ENCODE measurements at regions of chr4 and their contacts with region 1.

Region 1: DNA sequence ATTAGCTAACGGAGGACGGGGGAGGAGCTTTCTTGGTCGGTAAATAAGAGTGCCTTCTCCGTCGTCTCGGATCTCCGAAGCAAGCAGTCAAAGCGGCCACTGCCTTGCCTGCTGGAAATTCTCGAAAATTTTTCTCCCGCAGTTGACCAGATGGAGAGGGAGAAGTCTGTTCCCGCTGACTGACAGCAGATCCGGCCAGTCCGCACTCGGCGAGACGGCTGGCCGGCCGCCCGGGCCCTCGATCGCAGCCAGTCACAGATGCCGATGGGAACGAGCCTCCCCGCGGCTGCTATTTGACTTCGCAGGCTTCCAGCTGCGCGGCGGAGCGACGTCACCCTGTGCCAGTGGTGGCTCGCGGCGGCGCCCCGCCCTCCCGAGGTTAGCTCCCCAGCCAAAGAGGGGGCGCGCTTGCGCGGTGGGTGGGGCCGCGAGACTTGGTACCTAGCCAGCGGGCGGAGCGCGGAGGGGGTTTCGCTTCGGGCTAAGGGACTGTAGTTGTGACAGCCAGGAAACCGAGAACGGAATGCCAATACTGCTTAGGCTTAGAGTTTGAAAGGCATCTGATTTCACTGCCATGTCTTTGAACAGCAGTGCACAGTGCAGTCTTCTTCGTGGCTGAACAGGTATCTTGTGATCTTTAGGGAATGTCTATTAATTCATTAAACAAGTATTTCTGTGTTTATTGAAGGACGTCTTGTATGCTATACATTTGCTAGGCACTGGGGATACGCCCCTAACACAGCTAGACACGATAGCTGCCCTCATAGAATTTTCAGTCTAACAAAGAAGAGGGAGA is at the start of gene PPM1K:
- H3K4me3 Mint-ChIP-seq: peak within 1 kb of the TSS; percentile 92
- H3K27ac Mint-ChIP-seq: peak within 1 kb of the TSS; percentile 99
- H3K4me1 Mint-ChIP-seq: peaks cover 31% of the 10 kb centered on the region
- H3K27me3 Mint-ChIP-seq: no peaks in the 10 kb centered on the region

Region 2: DNA sequence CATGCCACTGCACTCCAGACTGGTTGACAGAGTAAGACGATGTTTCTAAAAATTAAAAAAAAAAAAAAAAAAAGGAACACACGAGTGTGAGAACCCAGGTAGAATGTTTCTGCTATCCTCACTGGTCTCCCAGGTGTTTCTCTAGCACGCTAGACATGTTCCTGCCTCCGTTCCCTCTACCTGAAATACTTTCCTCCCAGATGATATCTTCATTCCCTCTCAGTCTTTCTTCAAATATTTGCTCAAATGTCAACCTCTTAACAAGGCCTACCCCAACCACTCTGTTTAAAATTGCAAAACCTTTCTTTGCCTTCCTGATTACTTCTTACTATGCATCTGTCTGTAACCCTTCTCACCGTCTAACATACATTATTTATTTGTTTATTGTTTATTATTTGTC is 66.7 kb before region 1 on chr4:
- intact Hi-C with region 1: loop called (anchors 2 kb)
- H3K4me3 Mint-ChIP-seq: no peak overlapping the region
- H3K27ac Mint-ChIP-seq: no peak overlapping the region
- H3K4me1 Mint-ChIP-seq: peaks cover 7% of the 10 kb centered on the region
- H3K27me3 Mint-ChIP-seq: peaks cover 4% of the 10 kb centered on the region

Region 3: DNA sequence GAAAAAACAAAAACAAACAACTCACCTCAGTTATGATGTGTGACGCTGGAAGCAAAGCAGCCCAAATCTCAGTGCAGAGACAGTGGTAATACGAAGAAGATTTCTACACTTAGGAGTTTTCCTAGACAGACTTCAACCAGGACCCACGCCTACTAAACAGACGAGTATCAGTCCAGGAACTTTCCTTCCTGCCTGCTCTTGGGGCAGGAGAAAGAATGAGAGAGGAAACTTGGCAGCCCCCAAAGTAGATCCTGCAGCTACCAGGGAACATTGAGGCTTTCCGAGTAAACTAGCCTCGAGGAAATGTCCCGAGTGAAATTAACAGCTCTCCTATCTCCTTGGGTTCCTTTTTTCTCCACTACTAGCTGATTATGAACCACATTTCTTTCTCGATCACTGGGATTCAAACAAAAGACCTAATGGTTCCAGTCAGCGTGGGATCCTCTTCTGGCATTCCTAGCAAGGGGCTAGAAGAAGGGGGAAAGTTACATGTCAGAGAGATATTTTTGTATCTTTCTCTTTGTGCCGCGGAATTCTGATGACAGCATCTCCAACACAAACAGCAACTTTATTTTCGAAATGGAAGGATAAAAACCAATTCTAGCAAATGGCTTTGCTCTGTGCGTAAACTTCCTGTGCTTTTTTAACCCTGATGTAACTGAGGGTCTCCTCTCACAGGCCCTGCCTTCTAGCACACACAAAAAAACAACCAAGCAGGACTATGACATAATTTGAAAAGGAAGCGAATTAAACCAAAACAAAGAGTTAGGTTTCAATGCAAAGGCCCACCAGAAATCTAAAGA is 53.5 kb before region 1 on chr4:
- intact Hi-C with region 1: no loop called
- H3K4me3 Mint-ChIP-seq: no peak overlapping the region
- H3K27ac Mint-ChIP-seq: peak overlapping the region; percentile 55
- H3K4me1 Mint-ChIP-seq: peaks cover 8% of the 10 kb centered on the region
- H3K27me3 Mint-ChIP-seq: no peaks in the 10 kb centered on the region

Region 4: DNA sequence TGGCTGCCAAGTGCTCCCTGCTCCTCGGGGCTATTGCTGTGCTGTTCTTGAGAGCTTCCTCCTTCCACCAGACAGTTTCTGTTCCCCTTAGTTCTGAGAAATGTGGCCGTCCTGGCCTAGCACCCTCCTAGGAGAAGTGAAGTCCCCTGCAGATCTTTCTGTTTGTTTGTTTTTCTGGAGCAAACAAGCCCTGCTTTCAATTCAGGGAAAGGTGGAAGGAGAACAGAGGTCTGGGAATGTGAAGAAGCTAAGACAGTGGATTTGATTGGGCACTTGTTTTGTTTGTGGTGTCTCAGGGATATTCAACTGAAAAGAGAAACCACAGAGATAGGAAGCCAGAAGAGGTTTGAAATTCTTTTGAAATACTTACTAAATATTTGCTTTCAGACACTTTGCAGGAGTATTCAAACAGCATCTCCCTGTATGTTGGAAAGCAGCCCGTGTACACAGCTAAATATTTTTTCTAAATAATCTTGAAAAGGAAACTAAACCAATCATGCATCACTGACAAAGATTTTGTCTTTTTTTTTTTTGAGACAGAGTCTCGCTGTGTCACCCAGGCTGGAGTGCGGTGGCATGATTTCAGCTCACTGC is 36.2 kb after region 1 on chr4:
- intact Hi-C with region 1: loop called (anchors 2 kb)
- H3K4me3 Mint-ChIP-seq: peak overlapping the region; percentile 63
- H3K27ac Mint-ChIP-seq: peak overlapping the region; percentile 95
- H3K4me1 Mint-ChIP-seq: peaks cover 27% of the 10 kb centered on the region
- H3K27me3 Mint-ChIP-seq: no peaks in the 10 kb centered on the region

Region 5: GRCh38 chr4:88334967-88335665 is 50.5 kb after region 1 on chr4:
- intact Hi-C with region 1: no loop called
- H3K4me3 Mint-ChIP-seq: no peak overlapping the region
- H3K27ac Mint-ChIP-seq: no peak overlapping the region
- H3K4me1 Mint-ChIP-seq: peaks cover 19% of the 10 kb centered on the region
- H3K27me3 Mint-ChIP-seq: no peaks in the 10 kb centered on the region

Region 6: GRCh38 chr4:88378691-88379559 is 94.3 kb after region 1 on chr4 and contains the start of gene HERC6:
- intact Hi-C with region 1: loop called (anchors 2 kb)
- H3K4me3 Mint-ChIP-seq: peak within 1 kb of the TSS; percentile 93
- H3K27ac Mint-ChIP-seq: peak within 1 kb of the TSS; percentile 99
- H3K4me1 Mint-ChIP-seq: peaks cover 36% of the 10 kb centered on the region
- H3K27me3 Mint-ChIP-seq: no peaks in the 10 kb centered on the region

Region 7: DNA sequence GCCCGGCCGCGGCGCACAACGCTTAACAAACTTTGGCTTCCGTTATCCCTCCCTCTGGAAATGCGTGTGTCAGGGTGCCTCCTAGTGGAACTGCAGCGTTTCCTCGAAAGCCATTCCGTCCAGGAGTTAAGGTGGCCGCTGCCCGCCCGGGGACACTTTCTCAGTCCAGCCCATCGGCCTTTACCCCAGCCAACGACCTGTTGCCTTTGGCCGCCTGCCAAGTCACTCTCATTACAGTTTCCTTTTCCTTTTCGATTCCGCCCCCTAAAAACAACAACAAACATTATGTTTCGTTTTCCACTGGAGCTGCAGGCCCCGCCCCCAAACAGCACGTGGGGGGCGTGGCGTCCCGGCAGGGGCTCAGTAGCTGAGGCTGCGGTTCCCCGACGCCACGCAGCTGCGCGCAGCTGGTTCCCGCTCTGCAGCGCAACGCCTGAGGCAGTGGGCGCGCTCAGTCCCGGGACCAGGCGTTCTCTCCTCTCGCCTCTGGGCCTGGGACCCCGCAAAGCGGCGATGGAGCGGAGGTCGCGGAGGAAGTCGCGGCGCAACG is 172.2 kb after region 1 on chr4 and contains the start of gene HERC5:
- intact Hi-C with region 1: loop called (anchors 1 kb)
- H3K4me3 Mint-ChIP-seq: peak within 1 kb of the TSS; percentile 96
- H3K27ac Mint-ChIP-seq: peak within 1 kb of the TSS; percentile 89
- H3K4me1 Mint-ChIP-seq: peaks cover 13% of the 10 kb centered on the region
- H3K27me3 Mint-ChIP-seq: peaks cover 5% of the 10 kb centered on the region

Region 8: DNA sequence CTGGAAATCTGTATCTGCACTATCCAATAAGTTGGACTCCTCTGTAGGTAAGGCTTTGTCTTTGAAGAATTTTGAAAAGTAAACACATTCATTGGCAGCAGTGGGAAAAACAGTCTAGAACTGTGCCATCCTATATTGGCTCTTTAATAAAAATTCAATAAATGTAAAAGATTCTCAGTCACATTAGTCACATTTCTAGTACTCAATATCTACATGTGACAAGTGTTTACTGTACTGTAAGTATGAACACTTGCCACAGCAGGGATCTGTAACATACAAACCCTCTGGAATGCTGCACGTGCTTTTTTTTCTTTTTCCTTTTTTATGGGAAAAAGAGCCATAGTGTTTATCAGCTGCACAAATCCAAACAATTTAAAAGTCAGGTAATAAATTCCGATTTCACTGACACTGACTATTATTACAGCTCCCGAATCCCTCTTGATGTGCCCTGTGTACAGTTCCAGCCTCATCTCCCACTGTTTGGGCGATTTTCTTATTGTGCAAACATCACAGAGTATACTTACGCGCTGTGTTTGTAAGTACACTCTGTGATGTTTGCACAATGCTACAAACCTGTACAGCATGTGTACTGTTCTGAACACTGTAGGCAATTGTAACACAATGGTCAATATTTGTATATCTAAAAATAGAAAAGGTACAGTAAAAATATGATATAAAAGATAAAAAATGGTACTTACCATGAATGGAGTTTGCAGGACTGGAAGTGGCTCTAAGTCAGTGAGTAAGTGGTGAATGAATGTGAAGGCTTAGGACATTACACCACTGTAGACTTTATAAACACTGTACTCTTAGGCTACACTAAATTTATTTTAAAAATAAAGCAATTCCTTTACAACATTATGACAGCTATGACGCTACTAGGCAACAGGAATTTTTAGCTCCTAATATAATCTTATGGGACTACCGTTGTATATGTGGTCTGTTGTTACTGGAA is 230.2 kb after region 1 on chr4:
- intact Hi-C with region 1: loop called (anchors 5 kb)
- H3K4me3 Mint-ChIP-seq: no peak overlapping the region
- H3K27ac Mint-ChIP-seq: no peak overlapping the region
- H3K4me1 Mint-ChIP-seq: no peaks in the 10 kb centered on the region
- H3K27me3 Mint-ChIP-seq: no peaks in the 10 kb centered on the region